ENCODE measurements at regions of chr11 and their contacts with region 1.

Region 1: GRCh38 chr11:13335319-13335718 is 57.7 kb downstream of the BMAL1 start:
- DNase-seq: peak; percentile 69
- H3K4me3 ChIP-seq: no peak overlapping the region; a peak in 1 of 4 replicates
- H3K27ac ChIP-seq: no peak overlapping the region
- H3K4me1 ChIP-seq: peaks cover 16 to 47% of the 10 kb centered on the region in 2 experiments
- H3K27me3 ChIP-seq: no peaks in the 10 kb centered on the region
- CTCF ChIP-seq: peak; percentile 91
- EP300 ChIP-seq: no peak
- RAD21 ChIP-seq: peak; percentile 90

Region 2: DNA sequence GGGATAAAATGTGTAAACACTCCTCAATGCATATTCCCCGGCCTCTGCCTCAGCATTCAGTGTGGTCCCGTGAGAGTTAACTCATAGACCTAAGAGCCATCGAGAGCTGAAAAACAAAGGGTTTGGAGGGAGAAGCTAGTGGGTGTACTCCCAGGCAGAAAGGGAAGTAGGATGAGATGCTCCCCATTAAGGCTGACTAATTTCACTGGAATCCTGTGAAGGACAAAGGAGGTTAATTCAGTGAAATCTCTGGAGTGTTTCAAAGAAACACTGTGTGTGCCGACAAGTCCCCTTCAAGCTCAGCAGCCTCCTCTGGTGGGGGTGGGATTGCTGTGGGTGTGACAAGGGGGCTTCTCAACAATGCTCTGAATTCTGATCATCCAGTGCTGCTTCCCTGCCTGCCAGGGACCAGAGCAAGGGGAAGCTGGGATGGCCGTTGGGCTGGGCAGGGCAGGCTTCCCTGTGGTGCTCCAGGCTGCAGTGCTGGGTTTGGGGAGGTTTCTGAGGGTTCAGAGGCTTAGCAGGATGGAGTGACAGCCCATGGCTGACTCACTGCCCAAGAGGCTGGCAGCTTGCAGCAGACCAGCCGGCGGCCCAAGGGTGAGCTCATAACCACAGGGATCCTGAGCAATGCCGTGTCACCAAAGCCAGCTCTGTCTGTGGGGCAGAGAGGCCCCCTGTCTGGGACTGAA is 119.2 kb before region 1 on chr11:
- CTCF ChIA-PET with region 1: interaction called, 177 read pairs
- POLR2A ChIA-PET with region 1: no interaction called
- DNase-seq: no peak
- H3K4me3 ChIP-seq: peak overlapping the region; percentile 3 to 53; a peak in 3 of 4 replicates
- H3K27ac ChIP-seq: peak overlapping the region; percentile 77 to 100; a peak in 3 of 4 replicates
- H3K4me1 ChIP-seq: peaks cover 12 to 36% of the 10 kb centered on the region in 2 experiments
- H3K27me3 ChIP-seq: no peaks in the 10 kb centered on the region
- CTCF ChIP-seq: peak; percentile 28
- EP300 ChIP-seq: peak in 1 of 2 experiments; percentile 93; a peak in 2 of 4 replicates
- RAD21 ChIP-seq: no peak

Region 3: DNA sequence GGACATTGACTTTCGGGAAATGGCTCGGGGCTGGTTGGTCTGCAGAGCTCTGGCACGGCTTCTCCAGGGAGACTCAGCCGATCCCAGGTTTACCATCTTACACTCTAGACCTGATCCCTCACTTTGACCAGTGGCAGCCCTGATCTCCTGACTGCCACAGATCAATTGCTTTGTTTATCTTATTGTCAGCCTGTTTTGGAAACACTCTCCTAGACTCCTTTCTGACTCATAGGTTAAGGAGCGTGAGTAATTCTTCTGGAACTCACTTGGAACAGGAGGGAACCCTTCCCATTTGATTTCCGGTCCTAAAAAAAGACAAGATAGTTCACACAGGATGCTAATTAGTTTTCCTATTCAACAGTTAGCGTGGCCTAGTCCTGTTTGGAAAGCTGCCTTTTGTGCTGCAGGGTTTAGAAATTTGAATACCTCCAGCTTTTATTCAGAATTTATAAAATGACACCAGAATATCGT is 73.7 kb before region 1 on chr11:
- CTCF ChIA-PET with region 1: interaction called, 12 read pairs
- POLR2A ChIA-PET with region 1: no interaction called
- DNase-seq: no peak
- H3K4me3 ChIP-seq: no peak overlapping the region; a peak in 1 of 4 replicates
- H3K27ac ChIP-seq: peak overlapping the region; percentile 76 to 98; a peak in 3 of 4 replicates
- H3K4me1 ChIP-seq: peaks cover 7 to 23% of the 10 kb centered on the region in 2 experiments; a peak in 3 of 4 replicates
- H3K27me3 ChIP-seq: no peaks in the 10 kb centered on the region
- CTCF ChIP-seq: no peak
- EP300 ChIP-seq: peak in 1 of 2 experiments; percentile 78; a peak in 1 of 4 replicates
- RAD21 ChIP-seq: no peak

Region 4: GRCh38 chr11:13283636-13284035 is 51.7 kb before region 1 on chr11:
- CTCF ChIA-PET with region 1: interaction called, 36 read pairs
- POLR2A ChIA-PET with region 1: no interaction called
- DNase-seq: no peak
- H3K4me3 ChIP-seq: no peak overlapping the region
- H3K27ac ChIP-seq: no peak overlapping the region
- H3K4me1 ChIP-seq: peaks cover 1 to 15% of the 10 kb centered on the region in 2 experiments; a peak in 3 of 4 replicates
- H3K27me3 ChIP-seq: no peaks in the 10 kb centered on the region
- CTCF ChIP-seq: no peak
- EP300 ChIP-seq: no peak
- RAD21 ChIP-seq: no peak

Region 5: GRCh38 chr11:13303668-13304649 is 31.4 kb before region 1 on chr11:
- CTCF ChIA-PET with region 1: interaction called, 30 read pairs
- POLR2A ChIA-PET with region 1: no interaction called
- DNase-seq: no peak
- H3K4me3 ChIP-seq: no peak overlapping the region
- H3K27ac ChIP-seq: no peak overlapping the region
- H3K4me1 ChIP-seq: peaks cover 0 to 22% of the 10 kb centered on the region in 2 experiments; a peak in 1 of 4 replicates
- H3K27me3 ChIP-seq: no peaks in the 10 kb centered on the region
- CTCF ChIP-seq: no peak
- EP300 ChIP-seq: no peak
- RAD21 ChIP-seq: no peak

Region 6: DNA sequence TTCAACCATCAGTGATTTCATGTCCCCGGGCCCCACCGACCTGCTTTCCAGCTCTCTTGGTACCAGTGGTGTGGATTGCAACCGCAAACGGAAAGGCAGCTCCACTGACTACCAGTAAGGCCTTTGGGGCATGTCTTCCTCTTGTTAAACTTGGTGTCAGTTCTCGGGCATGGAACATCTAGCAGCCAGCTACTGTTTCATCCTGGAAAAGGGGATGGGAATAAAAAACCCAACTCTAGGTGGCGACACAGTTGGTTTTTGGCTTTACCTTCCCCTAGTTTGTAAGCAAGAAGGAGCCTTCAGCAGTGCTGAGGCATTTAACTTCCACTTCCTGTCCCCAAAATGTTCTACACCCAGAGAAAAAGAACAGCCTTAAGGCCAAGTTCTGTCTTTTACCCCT is 19.0 kb after region 1 on chr11:
- CTCF ChIA-PET with region 1: interaction called, 25 read pairs
- POLR2A ChIA-PET with region 1: no interaction called
- DNase-seq: no peak
- H3K4me3 ChIP-seq: no peak overlapping the region
- H3K27ac ChIP-seq: no peak overlapping the region
- H3K4me1 ChIP-seq: no peaks in the 10 kb centered on the region; a peak in 1 of 4 replicates
- H3K27me3 ChIP-seq: no peaks in the 10 kb centered on the region
- CTCF ChIP-seq: peak; percentile 43; the same call in 1 of the 2 replicates
- EP300 ChIP-seq: no peak
- RAD21 ChIP-seq: peak; percentile 15; the same call in 1 of the 2 replicates

Measured in SK-N-SH (cell line).